Psoas muscle (tissue), 8 donors: ENCODE measurements at regions of chr2 and their contacts with region 1.

Region 1: DNA sequence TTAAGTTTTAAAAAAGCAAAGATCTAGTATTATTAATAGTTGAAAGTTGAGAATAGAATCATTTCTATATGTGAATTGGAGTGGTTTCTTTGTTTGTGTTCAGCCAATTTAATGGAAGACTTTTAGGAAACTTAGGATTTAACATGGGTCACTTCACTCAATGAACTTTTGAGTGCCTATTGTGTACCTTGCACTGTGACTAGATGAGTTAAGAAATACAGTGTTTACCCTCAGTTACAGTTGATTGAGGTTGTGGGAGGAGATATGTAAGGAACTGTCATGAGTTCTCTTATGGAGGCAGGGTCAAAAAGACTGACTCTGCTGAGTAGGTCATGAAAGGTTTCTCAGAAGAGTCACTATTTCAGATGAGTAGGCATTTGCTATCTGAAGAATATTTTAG is 98.6 kb downstream of the RAB3GAP1 start:
- DNase-seq: no peak
- ATAC-seq: no peak
- H3K4me3 ChIP-seq: no peak overlapping the region
- H3K27ac ChIP-seq: no peak overlapping the region
- H3K4me1 ChIP-seq: no peaks in the 10 kb centered on the region
- H3K27me3 ChIP-seq: no peaks in the 10 kb centered on the region
- CTCF ChIP-seq: no peak

Region 2: DNA sequence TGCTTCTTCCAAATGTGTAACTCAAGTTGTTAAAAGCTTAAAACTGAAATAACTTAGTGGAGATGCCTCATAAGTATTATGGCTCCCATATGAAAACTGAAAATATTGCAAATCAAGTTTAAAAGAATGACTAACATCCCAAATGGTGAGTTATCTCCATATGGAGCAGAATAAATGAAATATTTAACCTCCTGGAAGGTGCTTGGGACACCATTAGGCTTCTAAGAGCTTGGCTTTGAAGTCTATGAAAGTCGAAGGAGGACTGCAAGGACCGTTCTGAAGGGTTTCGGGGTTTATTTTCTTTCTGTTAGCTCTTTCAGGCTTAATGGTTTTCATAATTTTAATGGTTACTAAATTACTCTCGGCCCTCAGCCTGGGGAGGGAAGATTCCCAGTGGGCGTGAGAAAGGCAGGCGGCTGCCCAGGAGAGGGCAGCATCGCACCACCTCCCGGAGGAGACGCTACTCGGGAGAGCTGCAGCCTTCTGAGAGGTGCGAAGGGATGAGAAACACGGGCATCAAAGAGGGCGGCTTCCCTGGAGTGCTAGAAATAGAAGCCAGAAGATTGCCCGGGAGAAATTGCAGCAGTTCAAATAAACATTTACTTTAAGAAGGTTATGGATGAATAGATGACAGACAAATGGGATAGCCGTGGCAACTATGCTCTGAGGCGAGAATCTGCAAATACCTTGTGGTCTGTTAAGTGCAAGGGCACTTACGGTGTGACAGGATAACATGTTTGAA is 146.5 kb before region 1 on chr2:
- intact Hi-C with region 1: no loop called
- DNase-seq: peak; percentile 69 to 82
- ATAC-seq: peak; percentile 92 to 99 (median 96)
- H3K4me3 ChIP-seq: no peak overlapping the region
- H3K27ac ChIP-seq: no peak overlapping the region
- H3K4me1 ChIP-seq: no peaks in the 10 kb centered on the region
- H3K27me3 ChIP-seq: peaks cover 2 to 13% (median 3%) of the 10 kb centered on the region in 3 donors
- CTCF ChIP-seq: peak; percentile 91

Region 3: GRCh38 chr2:135304694-135305093 is 154.0 kb after region 1 on chr2:
- intact Hi-C with region 1: no loop called
- DNase-seq: no peak
- ATAC-seq: no peak
- H3K4me3 ChIP-seq: no peak overlapping the region
- H3K27ac ChIP-seq: no peak overlapping the region
- H3K4me1 ChIP-seq: no peaks in the 10 kb centered on the region
- H3K27me3 ChIP-seq: no peaks in the 10 kb centered on the region
- CTCF ChIP-seq: no peak

Region 4: GRCh38 chr2:135741395-135742324 is 591.0 kb after region 1 on chr2 and contains the start of gene UBXN4:
- intact Hi-C with region 1: loop called in 1 of 2 experiments (anchors 10 kb)
- DNase-seq: peak; percentile 97 to 99
- ATAC-seq: peak; percentile 94 to 96 (median 96)
- H3K4me3 ChIP-seq: peak within 1 kb of the TSS; percentile 97
- H3K27ac ChIP-seq: peak within 1 kb of the TSS; percentile 100
- H3K4me1 ChIP-seq: peaks cover 36% of the 10 kb centered on the region
- H3K27me3 ChIP-seq: no peaks in the 10 kb centered on the region
- CTCF ChIP-seq: peak; percentile 43
- total RNA-seq, gene UBXN4: 73.3 to 101 (median 96.0) TPM

Region 5: DNA sequence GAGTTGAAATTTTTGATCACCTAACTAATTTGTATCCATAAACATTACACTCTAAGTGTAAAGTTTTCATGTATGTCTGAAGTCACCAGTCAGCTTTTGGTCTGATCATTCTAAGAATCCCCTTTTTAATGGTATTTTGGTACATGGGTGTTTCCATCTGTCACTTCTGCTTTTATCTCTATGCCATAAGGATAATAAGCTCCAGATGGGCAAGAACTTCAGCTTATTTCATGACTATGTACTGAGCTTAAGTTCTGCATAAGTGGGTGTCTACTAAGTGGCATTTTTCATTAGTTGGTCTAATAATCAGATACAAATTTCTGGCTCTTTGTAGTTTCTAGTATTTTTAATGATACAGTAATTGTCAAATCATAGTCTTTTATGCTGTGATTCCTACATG is 611.3 kb after region 1 on chr2:
- intact Hi-C with region 1: loop called in 1 of 2 experiments (anchors 10 kb)
- DNase-seq: no peak
- ATAC-seq: no peak
- H3K4me3 ChIP-seq: no peak overlapping the region
- H3K27ac ChIP-seq: no peak overlapping the region
- H3K4me1 ChIP-seq: no peaks in the 10 kb centered on the region
- H3K27me3 ChIP-seq: no peaks in the 10 kb centered on the region
- CTCF ChIP-seq: no peak